Right ventricle myocardium inferior (tissue), 1 donor: ENCODE measurements at regions of chr10 and their contacts with region 1.

Region 1: GRCh38 chr10:42866115-42866995 is 83.8 kb downstream of the BMS1 start:
- DNase-seq: peak; percentile 92
- ATAC-seq: peak; percentile 100

Region 2: DNA sequence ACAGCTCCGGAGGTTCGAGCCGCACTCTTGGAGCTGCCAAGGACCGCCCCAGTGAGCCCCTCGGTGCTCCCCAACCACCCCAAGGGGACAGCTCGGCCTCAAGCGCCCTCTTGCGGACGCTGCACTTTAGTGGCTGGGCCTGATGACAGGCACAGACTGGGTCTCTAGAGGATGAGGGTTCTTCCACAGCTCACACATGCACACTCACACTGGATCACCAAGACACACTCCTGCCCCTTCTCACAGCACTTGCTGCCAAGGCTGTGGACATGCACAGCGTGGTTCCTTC is 212.6 kb after region 1 on chr10:
- intact Hi-C with region 1: loop called (anchors 2 kb)
- DNase-seq: peak; percentile 81
- ATAC-seq: peak; percentile 56

Region 3: GRCh38 chr10:43105102-43105785 is 238.9 kb after region 1 on chr10:
- intact Hi-C with region 1: loop called (anchors 1 kb)
- DNase-seq: peak; percentile 93
- ATAC-seq: peak; percentile 96